Calu3 (cell line): ENCODE measurements at regions of chr11 and their contacts with region 1.

Region 1: DNA sequence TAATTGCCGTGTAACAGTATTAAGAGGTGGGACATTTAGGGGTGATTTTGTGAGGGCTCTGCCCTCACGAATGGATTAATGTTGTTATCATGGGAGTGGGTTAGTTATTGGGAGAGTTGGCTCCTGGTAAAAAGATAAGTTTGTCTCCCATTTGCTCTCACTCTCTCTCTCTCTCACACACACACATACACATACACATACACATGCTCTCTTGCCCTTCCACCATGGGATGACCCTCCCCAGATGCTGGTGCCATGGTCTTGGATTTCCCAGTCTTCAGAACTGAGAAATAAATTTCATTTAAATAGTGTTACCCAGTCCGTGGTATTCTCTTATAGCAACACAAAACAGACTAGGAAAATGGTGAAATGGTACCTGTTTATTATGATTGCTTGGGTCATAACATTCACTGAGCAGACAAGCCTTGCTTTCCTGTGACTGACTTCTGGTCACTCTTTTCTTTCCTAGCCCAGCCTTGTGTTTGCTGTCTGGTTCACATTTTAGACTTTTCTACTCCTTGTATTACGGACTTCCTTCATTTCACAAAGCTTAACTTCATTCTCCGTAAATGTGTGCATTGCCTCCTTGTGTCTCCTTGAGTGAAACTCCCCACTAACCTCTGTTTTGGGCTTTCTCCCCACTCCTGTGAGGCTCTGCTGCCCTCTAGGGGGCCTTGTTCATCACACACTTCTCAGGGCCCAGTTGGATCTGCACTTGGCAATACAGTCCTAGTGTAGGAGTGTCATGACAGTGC is 206.5 kb upstream of the CTSC start:
- DNase-seq: peak; percentile 81
- H3K4me3 Mint-ChIP-seq: peak overlapping the region; percentile 14
- H3K27ac Mint-ChIP-seq: peak overlapping the region; percentile 89
- H3K4me1 Mint-ChIP-seq: peaks cover 39% of the 10 kb centered on the region
- H3K27me3 Mint-ChIP-seq: no peaks in the 10 kb centered on the region
- CTCF ChIP-seq: peak; percentile 87

Region 2: DNA sequence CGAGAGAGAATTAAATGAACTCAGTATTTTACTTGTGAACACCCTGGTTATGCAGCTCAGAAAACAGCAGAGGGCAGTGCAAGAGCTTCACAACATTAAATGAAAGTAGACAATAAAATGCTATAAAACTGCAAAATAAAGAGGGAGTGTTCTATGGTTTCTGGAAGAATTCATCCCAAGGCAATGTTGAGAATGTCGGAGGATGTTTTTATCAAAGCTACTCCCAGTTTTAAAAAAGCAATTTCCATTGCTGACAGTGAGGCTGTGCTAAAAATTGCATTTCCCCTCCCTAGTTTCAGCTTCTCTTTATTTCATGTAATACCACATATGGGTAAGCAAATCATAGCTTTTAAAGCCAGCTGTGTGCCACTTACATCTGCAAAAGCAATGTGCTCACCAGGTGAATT is 665.7 kb before region 1 on chr11:
- CTCF ChIA-PET with region 1: interaction called, 4 read pairs
- intact Hi-C with region 1: loop called (anchors 1 kb)
- DNase-seq: peak; percentile 15
- H3K4me3 Mint-ChIP-seq: no peak overlapping the region
- H3K27ac Mint-ChIP-seq: no peak overlapping the region
- H3K4me1 Mint-ChIP-seq: no peaks in the 10 kb centered on the region
- H3K27me3 Mint-ChIP-seq: no peaks in the 10 kb centered on the region
- CTCF ChIP-seq: no peak

Region 3: GRCh38 chr11:88016392-88017170 is 527.5 kb before region 1 on chr11:
- CTCF ChIA-PET with region 1: interaction called, 12 read pairs
- intact Hi-C with region 1: loop called (anchors 1 kb)
- DNase-seq: peak; percentile 68
- H3K4me3 Mint-ChIP-seq: no peak overlapping the region
- H3K27ac Mint-ChIP-seq: no peak overlapping the region
- H3K4me1 Mint-ChIP-seq: no peaks in the 10 kb centered on the region
- H3K27me3 Mint-ChIP-seq: no peaks in the 10 kb centered on the region
- CTCF ChIP-seq: peak; percentile 53

Region 4: GRCh38 chr11:88103337-88104206 is 440.5 kb before region 1 on chr11:
- CTCF ChIA-PET with region 1: interaction called, 10 read pairs
- intact Hi-C with region 1: loop called (anchors 2 kb)
- DNase-seq: peak; percentile 70
- H3K4me3 Mint-ChIP-seq: peak overlapping the region; percentile 51
- H3K27ac Mint-ChIP-seq: peak overlapping the region; percentile 89
- H3K4me1 Mint-ChIP-seq: peaks cover 41% of the 10 kb centered on the region
- H3K27me3 Mint-ChIP-seq: no peaks in the 10 kb centered on the region
- CTCF ChIP-seq: peak; percentile 70

Region 5: DNA sequence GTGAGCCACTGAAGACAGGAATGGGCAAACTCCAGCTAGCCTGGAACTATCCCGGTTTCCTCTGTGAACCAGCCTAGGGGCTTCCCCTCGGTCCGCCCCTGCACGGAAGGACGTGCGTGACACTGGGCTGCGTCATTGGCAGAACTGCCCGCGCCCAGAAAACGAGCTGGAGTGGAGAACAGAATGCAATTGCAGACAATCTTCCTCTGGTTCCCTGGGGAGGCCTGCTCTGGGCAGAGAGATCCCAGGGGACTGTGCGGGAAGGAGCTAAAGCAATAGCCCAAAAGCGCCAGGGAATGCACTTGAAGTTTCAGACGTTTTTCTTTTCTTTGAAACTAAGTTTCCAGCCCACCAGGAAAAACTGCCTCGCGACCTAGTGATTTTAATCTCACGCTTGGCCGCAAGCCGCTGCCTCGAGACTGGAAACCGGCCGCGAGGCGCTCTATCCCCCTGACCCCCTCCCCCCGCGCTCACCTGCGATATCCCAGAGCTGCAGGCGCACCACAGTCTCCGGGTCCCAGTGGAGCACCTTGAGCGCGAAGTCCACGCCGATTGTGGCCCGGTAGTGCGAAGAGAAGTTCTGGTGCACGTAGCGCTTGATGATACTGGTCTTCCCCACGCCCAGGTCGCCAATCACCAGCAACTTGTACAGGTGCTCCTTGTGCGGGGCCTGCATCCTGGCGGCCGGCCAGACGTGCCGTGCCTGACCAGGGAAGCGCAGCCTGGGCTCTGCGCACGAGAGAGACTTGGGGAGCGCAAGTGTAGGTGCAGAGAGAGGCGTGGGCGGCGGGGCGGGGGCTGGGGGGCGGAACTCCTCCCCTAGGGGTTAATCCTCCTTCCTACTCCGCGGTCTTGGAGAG is 369.1 kb before region 1 on chr11 and contains the start of gene RAB38:
- CTCF ChIA-PET with region 1: no interaction called
- intact Hi-C with region 1: loop called (anchors 1 kb)
- DNase-seq: peak; percentile 69
- H3K4me3 Mint-ChIP-seq: peak within 1 kb of the TSS; percentile 80
- H3K27ac Mint-ChIP-seq: peak within 1 kb of the TSS; percentile 60
- H3K4me1 Mint-ChIP-seq: peaks cover 13% of the 10 kb centered on the region
- H3K27me3 Mint-ChIP-seq: no peaks in the 10 kb centered on the region
- CTCF ChIP-seq: no peak
- total RNA-seq, gene RAB38: 6.3 and 7.3 TPM in 2 replicates

Region 6: GRCh38 chr11:88231894-88232482 is 312.1 kb before region 1 on chr11:
- CTCF ChIA-PET with region 1: no interaction called
- intact Hi-C with region 1: loop called (anchors 1 kb)
- DNase-seq: peak; percentile 8
- H3K4me3 Mint-ChIP-seq: no peak overlapping the region
- H3K27ac Mint-ChIP-seq: no peak overlapping the region
- H3K4me1 Mint-ChIP-seq: no peaks in the 10 kb centered on the region
- H3K27me3 Mint-ChIP-seq: no peaks in the 10 kb centered on the region
- CTCF ChIP-seq: no peak

Region 7: GRCh38 chr11:88435189-88435814 is 108.8 kb before region 1 on chr11:
- CTCF ChIA-PET with region 1: no interaction called
- intact Hi-C with region 1: no loop called
- DNase-seq: no peak
- H3K4me3 Mint-ChIP-seq: no peak overlapping the region
- H3K27ac Mint-ChIP-seq: no peak overlapping the region
- H3K4me1 Mint-ChIP-seq: peaks cover 16% of the 10 kb centered on the region
- H3K27me3 Mint-ChIP-seq: no peaks in the 10 kb centered on the region
- CTCF ChIP-seq: no peak

Region 8: DNA sequence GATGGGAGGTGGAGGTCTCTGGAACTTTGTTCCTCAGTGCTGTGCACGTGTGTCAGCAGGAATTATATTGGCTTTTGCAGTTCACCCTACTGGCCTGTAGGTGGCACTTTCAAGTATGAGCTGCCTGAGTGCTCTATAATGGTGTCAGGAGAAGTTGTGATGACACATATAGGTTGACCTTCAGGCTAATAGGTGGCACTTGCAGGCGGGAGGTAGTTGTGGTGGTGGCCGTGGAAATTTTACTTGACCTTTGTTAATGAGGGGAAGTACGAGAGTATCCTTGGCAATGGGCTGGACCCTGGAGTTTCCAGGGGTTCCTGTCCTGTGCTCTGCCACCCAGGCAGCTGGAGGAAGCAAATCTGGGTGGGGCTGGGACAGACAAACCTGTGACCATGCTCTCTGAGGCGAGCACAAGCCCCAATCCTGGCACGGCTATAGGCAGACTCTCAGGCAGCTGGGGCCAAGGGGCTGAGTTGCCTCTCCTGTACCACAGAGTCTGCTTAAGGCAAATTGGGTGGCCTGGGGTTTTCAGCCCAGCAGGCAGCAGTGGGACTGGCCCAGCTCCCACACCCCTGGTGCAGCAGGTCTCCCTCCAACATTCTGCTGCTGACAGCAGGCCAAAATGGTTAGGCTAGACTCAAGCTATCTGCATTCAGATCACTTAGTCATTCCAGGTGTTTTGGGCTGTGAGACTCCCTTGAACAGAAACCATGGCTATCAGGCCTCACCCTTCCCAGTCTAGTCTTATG is 59.0 kb before region 1 on chr11:
- CTCF ChIA-PET with region 1: interaction called, 3 read pairs
- intact Hi-C with region 1: loop called (anchors 2 kb)
- DNase-seq: peak; percentile 24
- H3K4me3 Mint-ChIP-seq: no peak overlapping the region
- H3K27ac Mint-ChIP-seq: no peak overlapping the region
- H3K4me1 Mint-ChIP-seq: peaks cover 40% of the 10 kb centered on the region
- H3K27me3 Mint-ChIP-seq: no peaks in the 10 kb centered on the region
- CTCF ChIP-seq: peak; percentile 68